Head of caudate nucleus (tissue), 42 donors: ENCODE measurements at regions of chr14 and their contacts with region 1.

Region 1: DNA sequence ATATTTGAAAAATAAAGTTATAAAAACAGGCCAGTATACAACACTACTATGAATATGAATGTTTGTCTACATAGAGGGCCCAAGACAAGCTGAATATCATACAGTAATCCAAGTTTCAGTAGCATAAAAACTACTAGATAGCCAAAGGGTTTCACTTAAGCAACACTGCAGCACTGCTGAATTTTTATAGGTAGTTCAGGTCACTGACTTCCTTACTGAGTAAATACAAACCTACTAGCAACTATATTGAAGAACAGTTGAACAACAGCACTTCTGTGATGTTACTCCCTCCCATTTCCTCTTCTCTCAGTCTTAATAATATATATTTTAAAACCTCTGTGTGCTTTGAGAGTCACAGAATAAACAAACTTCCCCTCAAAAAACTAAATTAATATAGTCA is 42.7 kb downstream of the GTF2A1 start:
- DNase-seq: no peak

Region 2: GRCh38 chr14:80987235-80988032 is 190.6 kb before region 1 on chr14:
- intact Hi-C with region 1: no loop called
- DNase-seq: peak; percentile 6 to 91 (median 76)

Region 3: DNA sequence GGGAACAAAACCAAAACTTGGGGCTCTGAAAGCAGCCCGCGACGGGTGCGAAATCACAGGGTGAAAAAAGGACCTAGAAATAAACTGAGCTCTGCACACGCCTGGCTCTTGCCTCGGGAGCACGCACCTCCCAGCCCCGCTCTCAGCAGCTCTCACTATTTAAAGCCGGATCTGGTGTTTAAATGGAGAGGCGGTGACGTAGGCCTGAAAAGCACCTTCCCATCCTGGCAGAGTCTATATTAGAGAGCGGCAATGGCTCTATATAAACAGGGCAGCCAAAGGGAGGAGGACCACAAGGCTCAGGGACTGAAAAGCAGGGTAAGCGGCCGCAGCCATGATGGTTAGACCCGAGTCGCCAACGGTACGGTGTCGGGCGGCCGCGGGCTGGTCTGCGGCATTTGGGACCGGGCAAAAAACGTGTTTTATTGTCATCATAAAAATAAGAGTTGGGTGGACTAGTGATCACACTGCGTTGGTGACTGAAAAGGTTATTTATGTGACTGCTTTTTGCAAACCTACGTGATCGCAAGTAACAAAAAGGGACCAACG is 41.2 kb after region 1 on chr14:
- intact Hi-C with region 1: loop called (anchors 5 kb)
- DNase-seq: peak; percentile 77 to 98 (median 92)

Region 4: DNA sequence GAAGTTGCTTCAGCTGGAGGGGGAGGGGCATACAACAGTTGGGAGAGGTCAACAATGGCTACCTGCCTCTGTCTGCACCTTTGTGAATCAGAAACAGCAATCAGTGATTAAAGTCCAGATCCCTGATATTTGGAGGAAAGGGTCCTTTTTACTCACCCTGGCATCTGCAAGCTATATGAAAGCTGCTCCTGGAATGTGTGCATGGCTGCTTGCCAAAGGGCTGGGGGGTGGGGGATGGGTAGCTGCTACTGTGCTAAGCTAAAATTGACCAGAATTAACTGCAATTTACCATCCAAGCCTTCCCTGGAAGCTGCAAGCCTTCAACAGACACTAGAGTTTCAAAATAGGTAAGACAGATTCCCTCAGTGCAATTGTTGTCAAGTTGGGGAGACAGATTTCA is 56.2 kb after region 1 on chr14:
- intact Hi-C with region 1: no loop called
- DNase-seq: no peak